ENCODE measurements at regions of chr20 and their contacts with region 1.

Region 1: DNA sequence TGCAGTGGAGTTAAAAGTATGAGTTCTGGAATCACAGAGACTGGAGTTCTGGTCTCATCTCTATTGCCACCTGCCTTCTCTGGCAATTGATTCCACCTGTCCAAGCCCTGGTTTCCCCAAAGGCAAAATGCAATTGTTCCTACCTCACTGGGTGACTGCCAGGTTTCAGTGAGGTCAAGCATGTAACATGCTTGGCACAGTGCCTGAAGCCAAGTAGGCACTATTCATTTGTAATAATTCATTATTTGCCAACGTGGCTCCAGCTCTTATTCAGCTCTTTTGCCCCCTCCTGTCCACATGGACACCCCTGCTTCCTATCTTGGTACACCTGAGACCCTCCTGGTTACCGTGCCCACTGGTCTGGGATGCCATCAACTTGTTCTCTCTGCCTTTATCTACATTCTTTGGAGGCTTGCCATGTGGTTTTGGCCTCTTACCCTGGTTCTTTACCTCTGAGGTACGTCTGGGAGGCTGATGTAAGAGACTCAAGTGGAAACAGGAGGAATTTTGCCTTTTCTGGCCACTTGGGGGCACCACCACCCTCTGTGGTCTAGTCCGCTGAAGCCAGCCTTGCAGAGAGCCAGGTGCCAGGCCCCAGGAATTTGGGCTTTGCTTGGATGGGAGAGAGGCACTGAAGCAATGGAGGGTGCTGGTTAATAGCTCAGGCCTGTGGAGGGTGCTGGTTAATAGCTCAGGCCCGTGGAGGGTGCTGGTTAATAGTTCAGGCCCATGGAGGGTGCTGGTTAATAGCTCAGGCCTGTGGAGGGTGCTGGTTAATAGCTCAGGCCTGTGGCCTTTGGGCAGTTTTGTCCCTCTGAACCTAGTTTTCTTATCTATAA is 1.7 kb downstream of the KCNK15 start:
- DNase-seq: peak; percentile 13 to 50 (median 49)
- H3K4me3 ChIP-seq: no peak overlapping the region
- H3K4me3 Mint-ChIP-seq: peak overlapping the region in 1 of 2 donors; percentile 86
- H3K27ac ChIP-seq: no peak overlapping the region
- H3K27ac Mint-ChIP-seq: no peak overlapping the region
- H3K4me1 ChIP-seq: peaks cover 6 to 11% of the 10 kb centered on the region in 2 donors
- H3K4me1 Mint-ChIP-seq: peaks cover 13% of the 10 kb centered on the region
- H3K27me3 ChIP-seq: peaks cover 15 to 40% of the 10 kb centered on the region in 2 donors
- H3K27me3 Mint-ChIP-seq: peaks cover 34 to 69% (median 39%) of the 10 kb centered on the region in 3 donors
- CTCF ChIP-seq: peak; percentile 71

Region 2: DNA sequence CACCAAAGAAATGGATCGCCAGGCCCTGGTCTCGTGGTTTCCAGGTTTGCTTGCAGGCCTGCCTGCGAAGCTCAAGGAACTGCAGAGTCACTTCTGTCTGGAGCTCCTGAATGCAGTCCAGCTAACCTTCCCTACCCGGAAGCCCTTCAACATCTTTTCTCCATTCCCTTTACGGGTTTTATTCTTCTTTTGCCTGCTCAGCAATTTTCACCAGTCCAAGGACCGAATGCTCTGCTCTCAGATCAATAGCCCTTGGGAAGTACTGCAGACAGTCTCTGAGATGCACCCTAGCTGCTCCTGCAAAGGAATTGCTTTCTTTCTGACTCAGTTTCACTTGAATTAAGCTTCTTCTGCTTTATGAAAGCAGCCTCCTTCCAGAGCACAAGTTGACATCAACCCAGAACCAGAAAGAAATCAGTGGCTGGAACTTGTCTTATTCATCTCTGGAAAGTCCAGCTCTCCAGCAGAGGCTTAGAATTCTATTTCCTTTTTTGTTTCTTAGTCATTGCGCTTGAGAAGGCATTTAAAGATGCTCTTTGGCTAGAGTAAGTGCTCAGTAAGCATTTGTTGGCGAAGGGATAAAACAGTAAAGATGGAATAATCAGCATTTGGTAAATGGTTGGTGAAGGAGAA is 119.4 kb after region 1 on chr20:
- intact Hi-C with region 1: loop called (anchors 5 kb)
- DNase-seq: peak in 2 of 3 donors; percentile 38 to 79
- H3K4me3 ChIP-seq: peak overlapping the region in 1 of 3 experiments; percentile 42
- H3K4me3 Mint-ChIP-seq: peak overlapping the region in 1 of 2 donors; percentile 57
- H3K27ac ChIP-seq: no peak overlapping the region
- H3K27ac Mint-ChIP-seq: peak overlapping the region in 1 of 7 donors; percentile 53
- H3K4me1 ChIP-seq: peaks cover 6 to 12% of the 10 kb centered on the region in 2 donors
- H3K4me1 Mint-ChIP-seq: peaks cover 16% of the 10 kb centered on the region
- H3K27me3 ChIP-seq: no peaks in the 10 kb centered on the region
- H3K27me3 Mint-ChIP-seq: peaks cover 0 to 16% (median 7%) of the 10 kb centered on the region in 3 donors
- CTCF ChIP-seq: no peak